Esophagus squamous epithelium (tissue), 5 donors: ENCODE measurements at regions of chr12 and their contacts with region 1.

Region 1: GRCh38 chr12:38906482-38907170 is 1.2 kb upstream of the CPNE8 start:
- DNase-seq: peak; percentile 9
- H3K4me3 ChIP-seq: peak overlapping the region; percentile 54 to 83 (median 76)
- H3K27ac ChIP-seq: peak overlapping the region; percentile 84 to 98 (median 94)
- H3K4me1 ChIP-seq: peaks cover 0 to 48% (median 6%) of the 10 kb centered on the region in 3 donors
- H3K27me3 ChIP-seq: no peaks in the 10 kb centered on the region
- CTCF ChIP-seq: peak; percentile 58 to 92 (median 78)
- POLR2A ChIP-seq: peak in 2 of 4 donors; percentile 26 to 42

Region 2: GRCh38 chr12:39037115-39037514 is 130.5 kb after region 1 on chr12:
- intact Hi-C with region 1: no loop called
- DNase-seq: no peak
- H3K4me3 ChIP-seq: no peak overlapping the region
- H3K27ac ChIP-seq: no peak overlapping the region
- H3K4me1 ChIP-seq: no peaks in the 10 kb centered on the region
- H3K27me3 ChIP-seq: no peaks in the 10 kb centered on the region
- CTCF ChIP-seq: no peak
- POLR2A ChIP-seq: no peak

Region 3: GRCh38 chr12:39103552-39104165 is 197.0 kb after region 1 on chr12:
- intact Hi-C with region 1: loop called (anchors 10 kb)
- DNase-seq: no peak
- H3K4me3 ChIP-seq: no peak overlapping the region
- H3K27ac ChIP-seq: no peak overlapping the region
- H3K4me1 ChIP-seq: peaks cover 0 to 5% (median 0%) of the 10 kb centered on the region in 3 donors
- H3K27me3 ChIP-seq: no peaks in the 10 kb centered on the region
- CTCF ChIP-seq: peak; percentile 22 to 82 (median 70)
- POLR2A ChIP-seq: no peak